ENCODE measurements at regions of chr7 and their contacts with region 1.

Region 1: GRCh38 chr7:150620617-150621371 is 11.4 kb downstream of the GIMAP6 start:
- DNase-seq: no peak
- H3K4me3 Mint-ChIP-seq: peak overlapping the region; percentile 57
- H3K27ac Mint-ChIP-seq: peak overlapping the region; percentile 86
- H3K4me1 Mint-ChIP-seq: peaks cover 63% of the 10 kb centered on the region
- H3K27me3 Mint-ChIP-seq: no peaks in the 10 kb centered on the region

Region 2: DNA sequence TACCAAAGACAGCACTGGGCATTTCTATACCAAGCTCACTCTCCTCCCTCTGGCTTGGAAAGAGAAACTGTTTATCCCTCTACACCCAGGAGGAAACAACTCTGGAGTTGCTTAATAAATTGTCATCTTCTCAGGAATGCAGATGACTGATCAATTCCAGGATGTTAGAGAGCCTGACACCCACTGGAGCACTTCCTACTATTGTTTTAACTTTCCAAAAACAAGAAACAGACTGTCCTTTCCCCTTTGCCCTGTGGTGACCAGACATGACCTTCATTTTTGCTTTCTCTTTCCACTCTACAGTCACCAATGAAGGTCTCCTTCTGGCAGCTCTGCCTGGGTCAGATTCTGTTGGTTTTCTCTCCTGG is 34.0 kb before region 1 on chr7:
- intact Hi-C with region 1: loop called (anchors 2 kb)
- DNase-seq: no peak
- H3K4me3 Mint-ChIP-seq: peak overlapping the region; percentile 15
- H3K27ac Mint-ChIP-seq: peak overlapping the region; percentile 86
- H3K4me1 Mint-ChIP-seq: peaks cover 62% of the 10 kb centered on the region
- H3K27me3 Mint-ChIP-seq: no peaks in the 10 kb centered on the region

Region 3: GRCh38 chr7:150610233-150610632 is 10.6 kb before region 1 on chr7:
- intact Hi-C with region 1: loop called (anchors 1 kb)
- DNase-seq: no peak
- H3K4me3 Mint-ChIP-seq: peak overlapping the region; percentile 2
- H3K27ac Mint-ChIP-seq: peak overlapping the region; percentile 90
- H3K4me1 Mint-ChIP-seq: peaks cover 59% of the 10 kb centered on the region
- H3K27me3 Mint-ChIP-seq: no peaks in the 10 kb centered on the region

Region 4: DNA sequence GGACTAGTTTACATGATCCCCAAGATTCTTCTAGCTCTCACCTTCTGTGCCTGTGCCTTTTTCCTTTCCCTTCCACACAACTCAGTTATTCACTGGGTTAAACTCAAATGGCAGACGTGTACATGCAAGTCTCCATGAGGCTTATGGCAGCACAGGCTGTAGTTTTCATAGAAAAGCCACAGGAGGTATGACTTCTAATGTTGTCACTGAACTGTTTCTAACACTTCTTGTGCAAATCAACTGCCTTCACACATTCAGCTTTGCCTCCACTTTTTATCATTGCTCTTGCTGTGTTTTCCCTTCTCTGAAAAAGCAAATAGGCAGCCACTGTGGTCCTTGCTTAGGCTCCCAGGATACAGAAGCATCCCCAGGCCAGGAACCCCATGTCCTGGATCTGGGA is 111.1 kb after region 1 on chr7:
- intact Hi-C with region 1: loop called (anchors 1 kb)
- DNase-seq: no peak
- H3K4me3 Mint-ChIP-seq: peak overlapping the region; percentile 68
- H3K27ac Mint-ChIP-seq: peak overlapping the region; percentile 99
- H3K4me1 Mint-ChIP-seq: peaks cover 78% of the 10 kb centered on the region
- H3K27me3 Mint-ChIP-seq: no peaks in the 10 kb centered on the region

Region 5: DNA sequence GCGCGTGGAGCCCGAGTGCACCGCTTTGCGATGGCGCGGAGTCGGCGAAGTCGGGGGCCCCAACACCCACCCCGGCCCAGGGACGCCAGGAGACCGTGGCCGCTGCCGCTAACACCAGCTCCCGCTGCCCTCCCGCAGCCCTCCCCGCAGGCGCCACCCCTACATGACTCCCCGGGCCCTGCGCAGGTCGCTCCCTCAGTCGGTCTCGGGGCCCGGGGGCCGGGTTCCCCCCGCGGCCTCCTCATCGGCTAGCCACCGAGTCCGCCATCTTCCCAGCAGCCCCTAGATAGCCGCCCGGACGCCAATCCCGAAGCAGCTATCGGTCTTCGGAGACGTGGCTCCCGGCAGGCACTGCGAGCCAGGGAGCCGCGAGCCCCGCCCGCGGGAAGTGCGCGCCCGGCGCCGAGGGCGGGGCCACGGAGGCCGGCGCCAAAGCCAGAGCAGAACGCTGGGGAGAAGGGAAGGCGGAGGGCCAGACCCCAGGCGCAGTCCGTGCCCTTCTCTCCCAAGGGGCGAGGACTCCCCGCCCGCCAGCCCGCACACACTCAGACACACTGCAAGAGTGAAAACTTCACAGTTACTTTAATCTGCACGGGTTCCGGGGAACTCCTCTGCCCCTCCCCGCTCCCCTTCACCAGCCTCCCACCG is 459.9 kb after region 1 on chr7 and contains the start of gene FASTK:
- intact Hi-C with region 1: no loop called
- DNase-seq: peak; percentile 88
- H3K4me3 Mint-ChIP-seq: peak within 1 kb of the TSS; percentile 95
- H3K27ac Mint-ChIP-seq: peak within 1 kb of the TSS; percentile 88
- H3K4me1 Mint-ChIP-seq: peaks cover 42% of the 10 kb centered on the region
- H3K27me3 Mint-ChIP-seq: peaks cover 10% of the 10 kb centered on the region
- total RNA-seq, gene FASTK: 92.6 and 96.3 TPM in 2 replicates